Activated CD4-positive, alpha-beta memory T cell treated with anti-CD3 and anti-CD28 coated beads for 36 hours (primary cell): ENCODE measurements at regions of chr9 and their contacts with region 1.

Region 1: DNA sequence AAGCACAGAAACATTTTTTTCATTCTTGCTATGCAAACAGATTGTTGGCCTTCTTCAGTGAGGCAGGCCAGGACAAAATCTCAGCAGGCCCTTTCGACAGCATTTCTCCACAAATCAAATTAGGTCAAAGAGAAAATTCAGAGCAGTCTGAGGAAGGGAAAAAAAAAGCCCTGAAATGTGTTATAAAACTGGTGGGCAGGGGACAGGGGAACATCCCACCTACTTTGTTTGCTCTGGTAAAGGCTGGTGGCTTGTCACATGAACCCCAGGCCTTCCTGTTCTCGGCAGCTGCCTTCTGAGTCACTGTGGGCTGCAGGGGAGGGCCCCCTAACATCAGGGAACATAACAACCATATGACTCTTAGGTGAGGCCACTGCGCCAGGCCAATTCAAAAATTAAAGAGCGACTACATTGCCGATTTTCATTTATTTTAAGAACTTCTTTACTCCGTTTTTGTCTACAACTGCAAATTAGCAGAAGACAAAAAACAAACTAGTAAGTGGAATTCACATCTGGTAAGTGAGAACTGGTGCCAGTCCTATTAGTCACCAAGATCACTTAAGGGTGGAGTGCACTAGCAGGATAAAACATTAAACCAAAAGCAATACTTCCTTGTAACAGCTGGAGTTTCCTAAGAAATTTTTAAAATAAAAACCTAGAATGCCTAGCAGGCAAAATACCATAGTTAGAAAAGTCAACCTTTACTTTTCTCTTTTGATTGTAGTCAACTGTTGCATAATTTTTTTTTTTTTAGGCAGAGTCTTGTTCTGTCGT is 46.2 kb upstream of the DENND4C start:
- DNase-seq: peak; percentile 91
- H3K4me3 Mint-ChIP-seq: peak overlapping the region; percentile 68
- H3K27ac Mint-ChIP-seq: peak overlapping the region; percentile 87
- H3K4me1 Mint-ChIP-seq: peaks cover 28% of the 10 kb centered on the region
- H3K27me3 Mint-ChIP-seq: no peaks in the 10 kb centered on the region

Region 2: GRCh38 chr9:18721267-18721994 is 462.9 kb before region 1 on chr9:
- CTCF ChIA-PET with region 1: no interaction called
- POLR2A ChIA-PET with region 1: no interaction called
- intact Hi-C with region 1: no loop called
- DNase-seq: no peak
- H3K4me3 Mint-ChIP-seq: no peak overlapping the region
- H3K27ac Mint-ChIP-seq: no peak overlapping the region
- H3K4me1 Mint-ChIP-seq: no peaks in the 10 kb centered on the region
- H3K27me3 Mint-ChIP-seq: no peaks in the 10 kb centered on the region

Region 3: DNA sequence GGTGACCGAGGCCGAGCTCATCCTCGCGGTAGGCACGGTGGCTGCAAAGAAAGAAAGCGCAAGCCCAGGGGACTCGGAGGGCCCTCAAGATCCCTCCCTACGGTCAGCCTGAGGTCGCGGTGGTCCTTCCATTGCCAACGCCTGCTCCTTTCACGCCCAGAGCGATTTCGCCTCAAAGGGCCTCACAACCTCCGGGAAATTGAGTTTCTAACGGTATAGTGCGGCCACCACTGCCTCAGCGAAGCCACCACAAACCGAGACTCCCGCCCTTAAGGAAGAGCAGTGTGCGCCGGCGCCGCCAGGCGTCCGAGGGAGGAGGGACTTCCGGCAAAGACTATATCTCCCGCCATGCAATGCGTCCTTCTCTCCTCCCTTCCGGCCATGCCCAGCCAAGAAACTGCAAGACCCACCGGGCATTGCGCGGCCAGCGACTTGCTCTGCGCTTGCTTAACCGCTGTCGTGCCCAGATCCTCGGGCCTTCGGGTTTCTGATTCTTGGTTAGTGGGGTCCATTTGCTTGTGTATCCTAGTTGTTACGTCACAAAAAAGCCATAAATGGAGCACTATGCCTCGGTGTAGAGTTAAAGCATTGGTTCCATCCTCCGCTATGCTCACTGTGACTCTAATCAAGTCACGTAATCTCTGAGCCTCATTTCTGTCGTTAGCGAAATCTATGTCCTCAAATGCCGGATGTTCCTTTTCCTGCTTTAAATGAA is 81.5 kb before region 1 on chr9 and contains the start of gene HAUS6:
- CTCF ChIA-PET with region 1: interaction called, 3 read pairs
- POLR2A ChIA-PET with region 1: no interaction called
- intact Hi-C with region 1: loop called (anchors 1 kb)
- DNase-seq: peak; percentile 97
- H3K4me3 Mint-ChIP-seq: peak within 1 kb of the TSS; percentile 95
- H3K27ac Mint-ChIP-seq: peak within 1 kb of the TSS; percentile 93
- H3K4me1 Mint-ChIP-seq: peaks cover 22% of the 10 kb centered on the region
- H3K27me3 Mint-ChIP-seq: no peaks in the 10 kb centered on the region
- total RNA-seq, gene HAUS6: 28.7 to 29.8 TPM

Region 4: DNA sequence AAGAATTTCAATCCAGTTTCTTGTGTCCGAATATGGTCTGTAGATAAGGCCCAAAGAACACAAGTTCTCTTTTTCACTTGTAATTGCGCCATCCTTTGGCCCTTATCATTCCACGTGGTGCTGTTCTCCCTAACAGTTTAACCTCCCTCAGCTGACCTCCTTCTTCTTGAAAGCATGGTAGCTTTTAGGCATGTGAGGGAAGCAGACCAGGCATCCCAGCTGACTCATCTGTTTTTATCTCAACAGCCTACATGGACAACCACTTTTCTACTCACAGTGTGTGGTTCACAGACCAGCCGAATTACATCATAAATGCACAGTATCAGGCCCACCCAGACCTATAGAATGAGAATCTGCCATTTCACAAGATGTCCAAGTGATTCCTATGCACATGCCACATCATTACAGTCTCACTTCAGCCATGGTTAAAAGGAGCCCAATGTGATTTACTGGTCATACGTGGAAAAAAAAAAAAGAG is 30.2 kb before region 1 on chr9:
- CTCF ChIA-PET with region 1: no interaction called
- POLR2A ChIA-PET with region 1: no interaction called
- intact Hi-C with region 1: loop called (anchors 1 kb)
- DNase-seq: peak; percentile 18
- H3K4me3 Mint-ChIP-seq: no peak overlapping the region
- H3K27ac Mint-ChIP-seq: no peak overlapping the region
- H3K4me1 Mint-ChIP-seq: peaks cover 36% of the 10 kb centered on the region
- H3K27me3 Mint-ChIP-seq: no peaks in the 10 kb centered on the region

Region 5: DNA sequence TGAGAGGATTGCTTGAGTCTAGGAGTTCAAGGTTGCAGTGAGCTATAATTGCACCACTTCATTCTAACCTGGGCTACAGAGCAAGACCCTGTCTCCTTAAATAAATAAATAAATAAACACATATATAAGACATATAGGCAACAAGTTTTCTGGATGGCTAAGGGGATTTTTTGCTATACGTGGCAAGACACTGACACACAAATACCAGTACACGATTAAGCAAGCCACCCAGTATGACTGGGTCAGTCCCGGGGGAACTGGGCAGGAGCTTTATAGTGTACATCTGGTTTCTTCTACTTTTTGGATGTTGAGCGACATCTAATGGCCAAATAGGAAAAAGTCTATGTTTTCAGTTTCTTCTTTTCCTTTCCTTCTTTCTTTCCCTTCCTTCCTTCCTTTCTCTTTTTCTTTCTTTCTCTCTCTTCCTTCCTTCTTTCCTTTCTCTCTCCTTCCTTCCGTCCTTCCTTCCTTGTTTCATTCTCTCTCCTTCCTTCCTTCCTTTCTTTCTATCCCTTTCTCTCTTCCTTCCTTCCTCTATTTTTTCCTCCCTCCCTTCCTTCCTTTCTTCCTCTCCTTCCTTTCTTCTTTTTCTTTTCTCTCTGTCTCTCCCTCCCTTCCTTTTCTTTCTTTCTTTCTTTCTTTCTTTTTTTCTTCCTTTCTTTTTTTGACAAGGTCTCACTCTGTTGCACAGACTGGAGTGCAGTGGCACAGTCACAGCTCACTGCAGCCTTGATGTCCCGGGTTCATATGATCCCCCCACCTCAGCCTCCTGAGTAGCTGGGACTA is 10.0 kb before region 1 on chr9:
- CTCF ChIA-PET with region 1: interaction called, 20 read pairs
- POLR2A ChIA-PET with region 1: interaction called, 8 read pairs
- intact Hi-C with region 1: loop called (anchors 1 kb)
- DNase-seq: peak; percentile 79
- H3K4me3 Mint-ChIP-seq: no peak overlapping the region
- H3K27ac Mint-ChIP-seq: no peak overlapping the region
- H3K4me1 Mint-ChIP-seq: peaks cover 22% of the 10 kb centered on the region
- H3K27me3 Mint-ChIP-seq: no peaks in the 10 kb centered on the region

Region 6: DNA sequence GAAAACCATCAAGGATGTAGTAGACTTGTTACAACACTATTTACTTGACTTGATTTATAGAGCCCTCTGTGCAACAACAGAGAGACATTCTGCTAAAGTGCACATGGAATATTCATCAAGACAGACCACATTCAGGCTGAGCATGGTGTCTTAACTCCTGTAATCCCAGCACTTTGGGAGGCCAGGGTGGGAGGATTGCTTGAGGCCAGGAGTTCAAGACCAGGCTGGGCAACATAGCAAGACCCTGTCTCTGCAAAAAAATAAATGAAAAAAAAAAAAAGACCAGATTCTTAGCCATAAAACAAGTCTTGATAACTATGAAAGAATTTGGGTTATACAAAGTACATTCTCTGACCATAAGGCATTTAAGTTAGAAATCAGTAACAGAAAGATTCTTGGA is 71.5 kb after region 1 on chr9:
- CTCF ChIA-PET with region 1: no interaction called
- POLR2A ChIA-PET with region 1: no interaction called
- intact Hi-C with region 1: no loop called
- DNase-seq: no peak
- H3K4me3 Mint-ChIP-seq: no peak overlapping the region
- H3K27ac Mint-ChIP-seq: no peak overlapping the region
- H3K4me1 Mint-ChIP-seq: peaks cover 35% of the 10 kb centered on the region
- H3K27me3 Mint-ChIP-seq: no peaks in the 10 kb centered on the region

Region 7: DNA sequence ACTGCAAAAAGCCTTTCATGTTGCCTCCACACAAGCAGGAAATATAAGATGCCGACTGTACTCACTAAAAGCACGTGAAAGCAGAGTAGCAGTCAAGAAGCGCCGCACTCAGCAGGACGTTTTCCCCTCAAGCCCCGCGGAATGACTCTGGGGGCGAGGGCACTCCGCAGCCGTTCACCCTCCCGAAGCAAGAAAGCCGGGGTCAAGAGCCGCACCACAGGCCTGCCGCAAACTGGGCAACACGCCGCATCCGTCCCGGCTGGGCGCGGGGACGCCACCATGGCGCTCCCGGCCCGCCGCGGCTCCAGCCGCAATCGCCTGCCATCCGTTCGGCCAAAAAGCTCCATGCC is 195.3 kb after region 1 on chr9:
- CTCF ChIA-PET with region 1: no interaction called
- POLR2A ChIA-PET with region 1: interaction called, 3 read pairs
- intact Hi-C with region 1: loop called (anchors 1 kb)
- DNase-seq: no peak
- H3K4me3 Mint-ChIP-seq: peak overlapping the region; percentile 100
- H3K27ac Mint-ChIP-seq: peak overlapping the region; percentile 100
- H3K4me1 Mint-ChIP-seq: peaks cover 50% of the 10 kb centered on the region
- H3K27me3 Mint-ChIP-seq: peaks cover 3% of the 10 kb centered on the region

Region 8: DNA sequence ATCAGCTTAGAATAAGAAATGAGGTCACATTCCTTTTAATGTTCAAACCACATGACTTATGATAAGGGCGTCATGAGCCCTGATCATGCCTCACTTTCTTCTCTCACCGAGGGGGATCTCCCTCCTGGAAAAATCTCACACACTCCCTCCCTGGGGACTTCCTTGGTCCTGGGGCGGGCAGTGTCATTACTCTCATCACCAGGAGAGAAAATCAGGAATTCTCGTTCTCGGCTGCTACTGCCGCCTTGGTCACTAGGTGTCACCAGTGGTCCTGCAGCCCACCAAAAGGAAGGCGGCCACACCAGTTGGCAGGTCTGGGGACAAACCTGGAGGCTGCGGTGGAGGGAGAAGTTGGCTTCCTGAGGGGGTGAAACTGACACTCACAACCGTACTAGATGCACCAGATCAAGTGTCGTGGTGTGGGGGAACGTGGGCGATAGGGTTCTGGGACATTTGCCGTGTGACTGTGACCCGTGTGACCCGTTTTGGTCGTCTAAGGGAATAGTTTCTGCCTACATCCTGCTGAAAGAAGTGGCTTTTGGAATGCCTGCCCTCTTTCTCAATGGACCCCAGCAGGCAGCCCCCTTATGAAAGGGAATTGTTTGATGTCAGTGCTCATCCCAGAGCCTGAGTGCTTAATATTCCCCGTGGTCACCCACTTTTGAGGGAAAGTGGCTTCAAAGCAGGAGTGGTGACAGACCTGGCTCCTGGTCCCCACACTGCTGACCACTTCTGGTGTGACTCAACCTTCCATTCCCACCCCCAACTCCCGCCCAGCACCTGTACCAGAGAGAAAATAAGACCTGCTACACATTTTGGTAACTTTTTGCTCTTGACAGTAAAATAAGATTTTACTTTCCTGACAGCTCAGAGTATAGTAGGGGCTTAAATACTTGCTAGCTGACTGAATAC is 287.7 kb after region 1 on chr9:
- CTCF ChIA-PET with region 1: no interaction called
- POLR2A ChIA-PET with region 1: no interaction called
- intact Hi-C with region 1: loop called (anchors 5 kb)
- DNase-seq: peak; percentile 80
- H3K4me3 Mint-ChIP-seq: peak overlapping the region; percentile 42
- H3K27ac Mint-ChIP-seq: no peak overlapping the region
- H3K4me1 Mint-ChIP-seq: peaks cover 16% of the 10 kb centered on the region
- H3K27me3 Mint-ChIP-seq: peaks cover 6% of the 10 kb centered on the region